ENCODE measurements at regions of chr18 and their contacts with region 1.

Region 1: GRCh38 chr18:7575157-7576028 is 8.3 kb downstream of the PTPRM start:
- DNase-seq: peak in 2 of 5 donors; percentile 42 to 52
- ATAC-seq: peak; percentile 51 to 88 (median 72)
- H3K4me3 ChIP-seq: no peak overlapping the region
- H3K27ac ChIP-seq: peak overlapping the region in 3 of 12 donors; percentile 13 to 51 (median 25)
- H3K4me1 ChIP-seq: peaks cover 4 to 84% (median 53%) of the 10 kb centered on the region in 12 donors
- H3K27me3 ChIP-seq: no peaks in the 10 kb centered on the region
- CTCF ChIP-seq: peak in 9 of 12 donors; percentile 12 to 50 (median 25)
- POLR2A ChIP-seq: no peak

Region 2: DNA sequence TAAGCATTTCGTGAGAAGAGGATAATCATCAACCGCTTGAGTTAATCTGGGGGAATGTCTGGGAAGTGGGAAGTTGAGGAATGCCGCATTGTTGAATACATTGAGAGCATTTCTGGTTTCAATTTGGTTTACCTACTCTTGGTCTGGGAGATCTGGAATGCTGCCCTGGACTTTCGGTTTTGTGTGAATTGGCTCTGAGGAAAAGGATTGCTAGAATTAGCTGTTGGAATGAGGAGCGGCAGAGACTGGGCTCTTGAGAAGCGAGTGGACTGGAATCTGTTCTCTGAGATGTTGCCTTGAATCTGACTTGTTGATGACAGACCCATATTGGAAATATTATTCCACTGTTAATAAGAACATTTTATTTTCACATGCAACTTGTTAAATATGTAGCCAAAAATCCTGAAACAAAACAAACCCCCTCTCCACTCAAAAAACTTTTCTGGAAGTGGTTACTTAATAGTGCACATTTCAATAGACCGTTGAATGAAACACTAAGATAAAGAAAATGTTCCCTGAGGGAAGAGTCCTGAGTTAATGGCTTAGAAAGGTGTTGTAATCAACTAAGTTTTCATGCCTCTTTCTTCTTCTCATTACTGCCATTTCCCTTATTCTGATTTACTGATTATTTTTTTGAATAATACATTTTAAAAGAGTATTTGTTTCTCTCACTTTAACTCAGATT is 42.5 kb after region 1 on chr18:
- intact Hi-C with region 1: loop called in 3 of 10 experiments (anchors 2 to 5 kb)
- DNase-seq: peak in 4 of 5 donors; percentile 50 to 65 (median 62)
- ATAC-seq: peak in 3 of 4 donors; percentile 10 to 60 (median 49)
- H3K4me3 ChIP-seq: peak overlapping the region in 8 of 12 donors; percentile 4 to 33 (median 14)
- H3K27ac ChIP-seq: peak overlapping the region in 11 of 12 donors; percentile 9 to 73 (median 62)
- H3K4me1 ChIP-seq: peaks cover 13 to 97% (median 64%) of the 10 kb centered on the region in 12 donors
- H3K27me3 ChIP-seq: no peaks in the 10 kb centered on the region
- CTCF ChIP-seq: no peak
- POLR2A ChIP-seq: no peak

Region 3: DNA sequence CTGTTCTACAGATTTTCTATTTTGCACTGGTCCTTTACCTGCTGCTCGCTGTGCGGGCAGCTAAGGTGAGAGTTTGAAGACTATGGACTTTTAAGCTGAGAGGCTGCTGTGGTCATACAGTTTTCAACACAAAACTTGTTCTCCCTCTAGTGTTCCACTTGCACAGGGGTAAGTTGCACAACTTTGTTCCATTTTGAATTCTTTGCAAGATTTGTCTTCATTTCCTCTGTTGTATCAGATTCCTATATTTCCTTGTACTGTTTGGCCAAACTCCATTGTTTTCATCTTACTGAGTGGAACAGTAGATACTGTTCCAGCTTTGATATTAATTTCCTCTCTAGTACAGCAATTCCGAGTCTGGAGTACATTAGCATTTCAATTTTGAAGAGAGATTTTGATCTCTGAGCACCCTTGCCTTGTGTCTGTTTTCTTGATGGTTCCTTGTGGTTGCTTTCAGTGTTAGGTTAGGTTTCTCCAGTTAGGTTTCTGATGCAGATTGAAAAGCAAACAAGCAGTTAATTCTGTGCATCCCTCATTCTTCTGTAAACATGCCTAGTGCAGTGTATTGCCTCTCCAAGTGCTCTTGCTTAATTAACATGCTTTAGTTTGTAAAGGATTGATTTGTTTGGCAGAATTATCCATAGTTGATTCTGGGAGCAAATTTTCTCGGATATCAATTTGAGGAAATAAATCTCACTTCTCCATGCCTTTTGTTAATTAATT is 180.5 kb after region 1 on chr18:
- intact Hi-C with region 1: loop called in 5 of 10 experiments (anchors 5 to 10 kb)
- DNase-seq: no peak
- ATAC-seq: peak; percentile 41 to 52 (median 48)
- H3K4me3 ChIP-seq: no peak overlapping the region
- H3K27ac ChIP-seq: peak overlapping the region in 3 of 12 donors; percentile 32 to 58 (median 42)
- H3K4me1 ChIP-seq: peaks cover 0 to 91% (median 41%) of the 10 kb centered on the region in 12 donors
- H3K27me3 ChIP-seq: no peaks in the 10 kb centered on the region
- CTCF ChIP-seq: peak in 11 of 12 donors; percentile 14 to 58 (median 37)
- POLR2A ChIP-seq: no peak

Region 4: DNA sequence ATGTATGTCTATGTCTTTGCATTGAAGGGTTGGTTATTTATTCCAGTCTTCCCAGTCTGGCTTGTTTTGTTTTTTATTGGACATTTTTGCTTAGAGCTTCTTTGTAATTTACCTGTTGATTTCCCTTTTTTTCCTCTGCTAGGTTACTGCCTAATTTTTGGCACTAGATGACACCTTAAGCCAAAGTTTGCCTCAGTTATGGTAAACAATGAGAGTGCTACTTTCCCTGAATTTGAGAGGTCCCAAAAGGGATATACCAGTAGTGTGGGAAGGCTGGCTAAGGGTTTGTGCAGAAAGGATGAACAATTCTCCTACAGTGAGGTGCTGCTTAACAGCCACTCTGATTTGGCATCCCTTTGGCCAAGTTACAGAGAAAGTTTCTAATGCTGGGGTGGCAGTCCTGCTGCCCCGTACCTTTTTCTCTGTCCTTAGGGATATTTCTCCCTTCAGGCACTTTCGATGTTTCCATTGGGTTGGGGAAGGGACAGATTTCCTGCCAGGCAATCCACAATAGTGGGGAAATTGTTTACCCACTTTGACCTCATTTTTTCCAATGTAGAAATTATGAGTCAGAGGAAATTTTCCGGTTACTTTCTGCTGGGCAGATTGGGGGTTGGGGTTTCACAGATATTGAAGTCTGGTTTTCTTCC is 346.7 kb after region 1 on chr18:
- intact Hi-C with region 1: no loop called
- DNase-seq: no peak
- ATAC-seq: peak in 2 of 4 donors; percentile 37 to 38
- H3K4me3 ChIP-seq: no peak overlapping the region
- H3K27ac ChIP-seq: peak overlapping the region in 1 of 12 donors; percentile 54
- H3K4me1 ChIP-seq: peaks cover 0 to 41% (median 24%) of the 10 kb centered on the region in 12 donors
- H3K27me3 ChIP-seq: no peaks in the 10 kb centered on the region
- CTCF ChIP-seq: no peak
- POLR2A ChIP-seq: no peak

Region 5: GRCh38 chr18:7950380-7951143 is 375.2 kb after region 1 on chr18:
- intact Hi-C with region 1: loop called in 1 of 10 experiments (anchors 10 kb)
- DNase-seq: no peak
- ATAC-seq: peak in 1 of 4 donors; percentile 11
- H3K4me3 ChIP-seq: no peak overlapping the region
- H3K27ac ChIP-seq: no peak overlapping the region
- H3K4me1 ChIP-seq: peaks cover 0 to 40% (median 15%) of the 10 kb centered on the region in 12 donors
- H3K27me3 ChIP-seq: no peaks in the 10 kb centered on the region
- CTCF ChIP-seq: no peak
- POLR2A ChIP-seq: no peak

Measured in heart left ventricle (tissue), 16 donors.